ENCODE measurements at regions of chr3 and their contacts with region 1.

Region 1: GRCh38 chr3:48663415-48664312 is 978 bp upstream of the CELSR3 start:
- DNase-seq: peak; percentile 99
- H3K4me3 ChIP-seq: peak overlapping the region; percentile 73 to 84 (median 82)
- H3K27ac ChIP-seq: peak overlapping the region; percentile 97
- H3K4me1 ChIP-seq: peaks cover 0 to 11% (median 7%) of the 10 kb centered on the region in 4 experiments; a peak in 5 of 7 replicates
- H3K27me3 ChIP-seq: 0 out of 7 replicates have a peak, but pooled peaks cover 0 to 4% (median 0%) of the 10 kb centered on the region in 4 experiments
- CTCF ChIP-seq: peak in 2 of 3 experiments; percentile 67 to 91; a peak in 3 of 4 replicates
- EP300 ChIP-seq: peak in 1 of 2 experiments; percentile 85; a peak in 1 of 3 replicates
- POLR2A ChIP-seq: peak in 1 of 2 experiments; percentile 68; a peak in 2 of 3 replicates
- RAD21 ChIP-seq: 0 out of 4 replicates have a peak, but pooled peaks have one; percentile 10 to 13

Region 2: DNA sequence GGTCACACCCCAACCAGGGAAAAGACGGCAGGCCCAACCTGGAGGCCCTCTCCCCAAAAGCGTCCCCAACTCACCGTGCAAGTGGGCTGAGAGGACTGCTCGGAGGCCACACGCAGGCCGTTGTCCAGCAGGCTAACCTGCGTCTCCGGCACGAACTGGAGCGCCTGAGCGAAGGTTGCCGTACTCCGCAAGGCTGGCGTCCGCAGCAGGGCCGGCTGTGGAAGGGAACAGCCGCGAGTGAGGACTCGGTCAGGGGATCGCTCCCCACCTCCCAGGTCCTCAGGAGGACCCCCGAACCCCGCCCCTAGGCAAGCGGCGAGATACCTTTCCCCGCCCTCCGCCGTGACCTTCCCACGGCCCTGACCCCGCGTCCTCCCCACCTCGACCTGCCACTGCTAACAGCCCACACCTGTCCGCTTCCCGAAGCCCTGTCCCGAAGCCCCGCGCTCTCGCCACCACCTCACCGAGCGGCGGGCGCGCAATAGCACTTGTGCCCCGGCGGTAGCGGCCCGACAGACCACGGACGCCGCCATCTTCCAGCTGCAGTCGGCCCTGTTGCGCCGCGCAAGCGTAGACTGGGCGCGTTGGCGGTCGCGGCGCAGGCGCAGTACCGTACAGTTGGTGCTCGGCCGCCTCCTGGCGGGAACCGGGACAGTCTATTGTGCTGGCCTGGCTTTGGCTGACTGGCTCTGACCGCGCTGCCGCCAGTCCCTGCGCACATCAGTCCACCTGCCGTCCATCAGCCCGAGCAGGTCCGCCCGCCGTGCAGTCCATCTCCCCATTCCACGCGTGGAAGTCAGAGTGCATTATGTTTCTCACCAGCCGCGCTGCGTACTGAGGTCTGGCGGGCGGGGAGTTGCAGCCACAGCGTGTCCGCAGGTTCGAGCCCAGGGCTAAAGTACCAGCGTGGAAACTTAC is 54.3 kb before region 1 on chr3 and contains the start of gene UQCRC1:
- CTCF ChIA-PET with region 1: interaction called, 3 read pairs
- POLR2A ChIA-PET with region 1: interaction called, 16 read pairs
- DNase-seq: peak; percentile 88 to 93
- H3K4me3 ChIP-seq: peak within 1 kb of the TSS; percentile 79 to 99 (median 91)
- H3K27ac ChIP-seq: peak within 1 kb of the TSS; percentile 85
- H3K4me1 ChIP-seq: peaks cover 0 to 2% (median under 1%) of the 10 kb centered on the region in 4 experiments; a peak in 2 of 7 replicates
- H3K27me3 ChIP-seq: no peaks in the 10 kb centered on the region
- CTCF ChIP-seq: peak; percentile 64 to 74 (median 71)
- EP300 ChIP-seq: no peak
- POLR2A ChIP-seq: peak; percentile 85 to 87
- RAD21 ChIP-seq: peak in 1 of 2 experiments; percentile 38; a peak in 3 of 4 replicates
- total RNA-seq, gene UQCRC1: 310 TPM in 2 replicates

Region 3: DNA sequence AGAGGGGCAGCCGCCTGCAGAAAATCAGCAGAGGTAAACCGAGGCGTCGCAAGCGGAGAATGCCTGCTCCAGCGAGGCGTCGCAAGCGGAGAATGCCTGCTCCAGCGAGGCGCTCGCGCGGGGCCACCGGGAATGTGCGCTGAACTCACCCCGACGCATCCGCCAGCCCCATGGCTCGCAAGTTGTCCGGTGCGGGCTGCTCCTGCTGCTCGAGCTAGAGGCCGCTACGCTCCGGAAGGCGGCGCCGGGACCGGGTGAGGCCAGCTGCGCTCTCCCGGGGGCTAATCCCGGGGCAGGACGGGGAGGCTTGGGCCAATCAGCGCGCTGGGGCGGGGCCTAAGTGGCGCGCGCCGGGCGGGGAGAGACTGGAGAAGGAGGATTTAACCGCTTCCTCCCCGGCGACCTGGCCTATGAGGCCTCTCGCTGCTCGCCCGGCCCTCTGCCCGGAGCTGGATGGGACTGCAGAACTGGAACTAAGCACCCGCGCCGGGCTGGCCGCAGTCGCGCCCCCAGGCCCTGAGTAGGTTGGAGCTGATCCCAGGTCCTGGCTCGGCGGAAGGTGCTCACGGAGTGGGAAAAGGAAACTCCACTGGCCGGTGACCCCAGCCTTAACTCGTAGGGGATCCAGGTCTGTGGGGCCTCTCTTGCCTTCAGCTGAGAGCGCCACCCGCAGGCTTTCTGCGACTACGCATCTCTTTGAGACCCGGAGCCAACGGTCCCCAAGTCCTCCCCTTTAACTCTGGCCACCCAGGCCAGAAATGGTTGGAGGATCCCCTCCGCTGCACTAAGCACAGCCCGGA is 28.2 kb before region 1 on chr3 and contains the start of gene SLC26A6:
- CTCF ChIA-PET with region 1: interaction called, 27 read pairs
- POLR2A ChIA-PET with region 1: interaction called, 91 read pairs
- DNase-seq: peak; percentile 90 to 98
- H3K4me3 ChIP-seq: peak within 1 kb of the TSS; percentile 75 to 84 (median 84)
- H3K27ac ChIP-seq: peak within 1 kb of the TSS; percentile 58; the same call in 1 of the 2 replicates
- H3K4me1 ChIP-seq: peaks cover 3 to 6% (median 5%) of the 10 kb centered on the region in 4 experiments
- H3K27me3 ChIP-seq: no peaks in the 10 kb centered on the region; a peak in 1 of 7 replicates
- CTCF ChIP-seq: peak in 2 of 3 experiments; percentile 76 to 86; a peak in 3 of 4 replicates
- EP300 ChIP-seq: no peak
- POLR2A ChIP-seq: peak in 1 of 2 experiments; percentile 81; a peak in 1 of 3 replicates
- RAD21 ChIP-seq: peak; percentile 55 to 67
- total RNA-seq, gene SLC26A6: 50.4 and 51.2 TPM in 2 replicates

Region 4: GRCh38 chr3:48685602-48686511 is 22.2 kb after region 1 on chr3 and contains the start of gene NCKIPSD:
- CTCF ChIA-PET with region 1: interaction called, 22 read pairs
- POLR2A ChIA-PET with region 1: interaction called, 175 read pairs
- DNase-seq: peak in 1 of 2 experiments; percentile 98
- H3K4me3 ChIP-seq: peak within 1 kb of the TSS; percentile 81 to 94 (median 86)
- H3K27ac ChIP-seq: peak within 1 kb of the TSS; percentile 94
- H3K4me1 ChIP-seq: peaks cover 0 to 11% (median 4%) of the 10 kb centered on the region in 4 experiments; a peak in 3 of 7 replicates
- H3K27me3 ChIP-seq: no peaks in the 10 kb centered on the region
- CTCF ChIP-seq: peak in 2 of 3 experiments; percentile 77 to 90; a peak in 3 of 4 replicates
- EP300 ChIP-seq: no peak
- POLR2A ChIP-seq: peak in 1 of 2 experiments; percentile 86; a peak in 2 of 3 replicates
- RAD21 ChIP-seq: peak; percentile 49 to 62
- total RNA-seq, gene NCKIPSD: 31.7 and 34.7 TPM in 2 replicates

Region 5: DNA sequence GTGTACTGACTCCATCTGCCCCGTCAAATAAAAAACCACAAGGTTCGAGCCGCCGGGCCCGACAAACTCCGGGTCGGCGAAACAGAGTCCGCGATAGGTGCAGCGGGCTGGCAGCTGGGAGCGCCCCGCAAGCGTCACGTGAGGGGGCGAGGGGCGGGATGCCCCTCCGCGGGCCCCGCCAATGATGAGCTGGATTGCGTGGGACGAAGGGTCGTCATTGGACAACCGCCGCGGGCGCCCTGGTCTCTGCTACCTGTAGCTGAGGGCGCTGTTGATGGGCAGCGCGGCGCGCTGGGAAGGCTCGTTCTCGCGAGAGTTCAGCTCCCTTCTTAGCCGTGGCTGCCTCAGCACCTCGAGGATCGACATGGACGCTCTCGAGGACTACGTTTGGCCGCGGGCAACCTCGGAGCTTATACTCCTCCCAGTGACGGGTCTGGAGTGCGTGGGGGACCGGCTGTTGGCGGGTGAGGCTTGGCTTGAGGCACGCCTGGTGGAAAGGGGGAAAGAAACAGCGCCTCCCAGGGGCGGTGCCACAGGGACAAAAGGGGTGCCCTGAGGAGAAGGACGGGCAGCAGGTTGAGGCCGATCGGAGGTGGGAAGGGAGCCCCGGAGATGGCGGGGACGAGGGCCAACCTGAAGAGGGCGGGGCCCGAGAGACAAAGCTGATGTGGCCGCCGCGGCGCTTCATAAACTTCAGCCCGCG is 343.6 kb after region 1 on chr3 and contains the start of gene WDR6:
- CTCF ChIA-PET with region 1: interaction called, 3 read pairs
- POLR2A ChIA-PET with region 1: interaction called, 33 read pairs
- DNase-seq: peak; percentile 96
- H3K4me3 ChIP-seq: peak within 1 kb of the TSS; percentile 66 to 94 (median 92)
- H3K27ac ChIP-seq: peak within 1 kb of the TSS; percentile 99
- H3K4me1 ChIP-seq: peaks cover 0 to 12% (median 6%) of the 10 kb centered on the region in 4 experiments; a peak in 5 of 7 replicates
- H3K27me3 ChIP-seq: no peaks in the 10 kb centered on the region
- CTCF ChIP-seq: peak in 1 of 3 experiments; percentile 34; a peak in 2 of 4 replicates
- EP300 ChIP-seq: no peak
- POLR2A ChIP-seq: peak in 1 of 2 experiments; percentile 95; a peak in 2 of 3 replicates
- RAD21 ChIP-seq: no peak
- total RNA-seq, gene WDR6: 180 and 187 TPM in 2 replicates

Region 6: DNA sequence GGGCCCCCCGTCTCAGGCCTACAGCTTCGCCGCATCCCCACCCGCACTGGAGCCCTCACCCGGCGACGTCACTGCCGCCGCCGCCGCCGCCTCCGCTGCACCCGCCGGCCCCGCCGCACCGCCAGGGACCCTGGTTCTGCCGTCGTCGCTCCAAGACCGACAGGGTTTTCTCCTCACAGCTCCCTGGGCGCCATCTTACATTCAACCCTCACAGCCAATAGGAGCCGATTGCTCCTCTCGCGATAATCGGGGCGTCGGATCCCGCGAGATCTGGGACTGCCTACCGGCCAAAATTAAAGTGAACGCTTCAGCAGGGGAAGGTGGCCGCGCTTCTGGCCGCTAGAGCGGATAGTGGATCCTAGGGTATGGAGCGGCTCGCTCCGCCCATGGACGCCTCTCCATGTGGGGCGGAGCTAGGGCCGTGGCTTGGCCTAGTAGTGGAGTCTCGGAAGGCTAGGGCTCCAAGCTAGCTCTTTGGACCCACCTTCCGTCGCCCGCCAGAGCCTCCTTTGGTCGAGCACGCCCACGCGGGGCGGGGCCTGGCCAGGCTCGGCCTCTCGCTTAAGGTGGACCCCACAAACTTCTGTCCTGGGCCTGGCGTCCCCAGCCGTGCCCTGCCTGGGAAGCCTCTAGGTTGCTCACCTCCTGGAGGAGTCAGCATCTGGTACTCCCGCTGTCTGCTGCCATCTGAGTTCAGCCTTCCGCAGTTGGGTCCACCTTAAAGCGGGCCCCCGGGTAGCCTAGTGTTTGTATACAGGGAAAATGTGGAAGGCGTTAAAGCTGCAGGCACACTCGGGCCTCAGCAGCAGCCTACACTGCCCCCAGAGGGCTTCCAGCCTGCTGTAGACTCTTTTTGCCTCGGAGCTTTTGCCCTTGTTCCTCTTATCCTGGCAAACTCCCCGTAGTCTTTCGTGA is 430.4 kb after region 1 on chr3 and contains the start of gene QRICH1:
- CTCF ChIA-PET with region 1: no interaction called
- POLR2A ChIA-PET with region 1: interaction called, 11 read pairs
- DNase-seq: peak; percentile 91 to 96
- H3K4me3 ChIP-seq: peak within 1 kb of the TSS; percentile 80 to 99 (median 89)
- H3K27ac ChIP-seq: peak within 1 kb of the TSS; percentile 88
- H3K4me1 ChIP-seq: no peaks in the 10 kb centered on the region; a peak in 1 of 7 replicates
- H3K27me3 ChIP-seq: no peaks in the 10 kb centered on the region
- CTCF ChIP-seq: peak; percentile 61 to 78 (median 65)
- EP300 ChIP-seq: no peak
- POLR2A ChIP-seq: peak; percentile 87 to 89
- RAD21 ChIP-seq: peak; percentile 47 to 59; a peak in 3 of 4 replicates
- total RNA-seq, gene QRICH1: 123 and 142 TPM in 2 replicates

Measured in H1 (cell line).